ENCODE measurements at regions of chr10 and their contacts with region 1.

Region 1: DNA sequence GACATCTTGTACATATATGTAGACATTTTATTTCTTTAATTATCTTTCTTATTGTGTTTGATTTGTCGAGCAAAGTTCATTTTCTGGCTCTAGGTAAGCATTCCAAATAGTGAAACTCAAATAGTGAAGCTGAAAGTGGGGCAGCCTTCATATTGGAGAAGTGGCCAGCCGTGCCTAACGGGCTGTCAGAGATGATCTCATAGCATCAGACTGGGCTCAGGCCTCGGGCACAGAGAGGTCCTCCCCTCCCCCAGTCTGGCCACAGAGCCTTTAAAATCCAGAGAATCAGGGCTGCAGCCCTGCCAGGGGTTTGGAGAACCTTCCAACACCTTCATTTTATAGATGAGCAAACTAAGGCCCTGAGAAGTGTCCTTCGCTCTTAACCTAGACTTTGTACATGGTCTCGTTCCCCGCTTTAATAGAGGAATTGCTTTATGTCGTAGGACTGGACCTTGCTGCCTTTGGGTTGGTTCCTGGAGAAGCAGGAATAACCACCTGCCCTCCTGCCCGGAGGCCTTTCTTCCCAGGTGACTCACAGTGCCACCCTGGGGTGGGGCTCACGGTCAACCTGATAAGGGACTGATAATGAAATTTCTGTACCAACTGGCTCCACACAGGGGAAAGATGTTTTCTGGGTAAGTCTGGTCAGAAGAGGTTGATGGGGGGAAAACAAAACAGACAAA is 7.3 kb downstream of the TSPAN15 start:
- DNase-seq: no peak
- ATAC-seq: peak in 1 of 2 experiments; percentile 49; a peak in 2 of 6 replicates
- H3K4me3 ChIP-seq: no peak overlapping the region
- H3K27ac ChIP-seq: peak overlapping the region; percentile 15 to 59; a peak in 4 of 6 replicates
- H3K4me1 ChIP-seq: peaks cover 58% of the 10 kb centered on the region
- CTCF ChIP-seq: no peak
- EP300 ChIP-seq: no peak
- POLR2A ChIP-seq: no peak
- RAD21 ChIP-seq: no peak

Region 2: DNA sequence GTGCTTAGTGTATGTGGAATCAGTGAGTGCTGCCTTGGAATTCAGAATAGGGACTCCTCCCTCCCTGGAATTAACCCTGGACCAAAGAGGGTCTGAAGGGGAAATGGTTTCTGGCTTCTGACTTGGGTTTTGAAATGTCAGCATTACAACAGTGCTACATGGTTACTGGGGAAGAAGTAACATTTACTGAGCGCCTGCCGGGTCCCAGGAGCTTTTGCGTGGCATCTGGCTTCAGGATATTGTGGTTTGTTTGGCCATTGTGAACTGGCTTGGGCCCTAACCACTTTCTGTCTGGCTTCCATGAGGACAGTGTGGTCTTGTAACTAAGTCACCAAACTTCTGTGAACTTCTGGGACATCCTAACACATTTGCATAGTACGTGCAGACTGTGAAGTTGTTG is 14.0 kb after region 1 on chr10:
- CTCF ChIA-PET with region 1: interaction called, 10 read pairs
- POLR2A ChIA-PET with region 1: no interaction called
- DNase-seq: no peak
- ATAC-seq: no peak
- H3K4me3 ChIP-seq: no peak overlapping the region
- H3K27ac ChIP-seq: peak overlapping the region in 1 of 2 experiments; percentile 3; a peak in 2 of 6 replicates
- H3K4me1 ChIP-seq: peaks cover 61% of the 10 kb centered on the region
- CTCF ChIP-seq: no peak
- EP300 ChIP-seq: no peak
- POLR2A ChIP-seq: no peak
- RAD21 ChIP-seq: no peak